ENCODE measurements at regions of chr5 and their contacts with region 1.

Region 1: DNA sequence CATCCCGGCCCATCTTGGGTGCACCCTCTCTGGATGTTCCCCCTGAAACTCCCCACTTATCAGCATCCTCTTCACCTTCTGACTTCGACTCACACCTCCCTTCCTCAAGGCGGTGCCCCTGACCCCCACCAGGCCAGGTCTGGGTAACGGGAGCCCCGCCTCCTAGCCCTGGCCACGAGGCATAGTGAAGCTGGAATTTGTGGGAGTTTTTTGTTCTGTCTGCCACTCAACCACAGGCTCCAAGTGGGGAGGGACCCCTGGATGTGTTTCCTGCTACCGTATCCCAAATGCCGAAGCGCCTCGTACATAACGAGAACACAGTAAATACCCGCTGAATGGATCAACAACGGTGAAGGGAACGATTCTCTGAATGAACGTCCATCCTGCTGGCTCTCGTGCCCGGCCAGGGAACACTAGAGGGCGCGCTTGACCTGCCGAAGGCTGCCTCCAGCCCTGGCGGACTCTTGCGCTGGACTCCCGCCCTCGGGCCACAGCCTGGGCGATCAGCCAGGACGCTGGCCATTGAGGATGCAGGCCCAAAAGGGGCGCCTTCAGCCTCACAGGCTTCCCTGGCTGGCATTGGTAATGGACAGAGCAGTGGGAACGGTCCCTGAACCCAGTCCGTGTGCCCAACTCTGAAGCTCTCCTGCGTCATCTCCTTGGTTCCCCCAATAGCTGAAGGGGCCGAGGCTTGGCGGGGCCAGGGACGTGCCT is 47.3 kb upstream of the PHYKPL start:
- DNase-seq: peak; percentile 87 to 95 (median 90)
- ATAC-seq: peak; percentile 83 to 94 (median 92)
- H3K4me3 ChIP-seq: no peak overlapping the region
- H3K27ac ChIP-seq: no peak overlapping the region
- H3K4me1 ChIP-seq: peaks cover 0 to 14% (median under 1%) of the 10 kb centered on the region in 12 donors
- H3K27me3 ChIP-seq: no peaks in the 10 kb centered on the region
- CTCF ChIP-seq: peak; percentile 86 to 98 (median 94)
- POLR2A ChIP-seq: no peak

Region 2: GRCh38 chr5:178331399-178331996 is 51.6 kb after region 1 on chr5:
- intact Hi-C with region 1: loop called in 1 of 10 experiments (anchors 2 kb)
- DNase-seq: peak; percentile 70 to 88 (median 81)
- ATAC-seq: peak; percentile 86 to 91 (median 88)
- H3K4me3 ChIP-seq: no peak overlapping the region
- H3K27ac ChIP-seq: peak overlapping the region; percentile 76 to 94 (median 85)
- H3K4me1 ChIP-seq: peaks cover 0 to 34% (median 20%) of the 10 kb centered on the region in 12 donors
- H3K27me3 ChIP-seq: no peaks in the 10 kb centered on the region
- CTCF ChIP-seq: no peak
- POLR2A ChIP-seq: peak in 1 of 2 donors; percentile 22

Region 3: GRCh38 chr5:178434851-178435250 is 155.0 kb after region 1 on chr5:
- intact Hi-C with region 1: loop called in 2 of 10 experiments (anchors 10 kb)
- DNase-seq: peak; percentile 64 to 81 (median 78)
- ATAC-seq: peak; percentile 82 to 90 (median 84)
- H3K4me3 ChIP-seq: peak overlapping the region in 2 of 12 donors; percentile 9 to 14
- H3K27ac ChIP-seq: peak overlapping the region in 5 of 12 donors; percentile 34 to 61 (median 54)
- H3K4me1 ChIP-seq: peaks cover 0 to 21% (median 3%) of the 10 kb centered on the region in 12 donors
- H3K27me3 ChIP-seq: no peaks in the 10 kb centered on the region
- CTCF ChIP-seq: peak in 3 of 12 donors; percentile 10 to 33 (median 32)
- POLR2A ChIP-seq: no peak

Region 4: GRCh38 chr5:178461004-178461730 is 181.3 kb after region 1 on chr5:
- intact Hi-C with region 1: loop called in 3 of 10 experiments (anchors 5 to 10 kb)
- DNase-seq: peak; percentile 81 to 89 (median 86)
- ATAC-seq: peak; percentile 94 to 98 (median 95)
- H3K4me3 ChIP-seq: peak overlapping the region in 2 of 12 donors; percentile 13 to 32
- H3K27ac ChIP-seq: peak overlapping the region; percentile 34 to 87 (median 70)
- H3K4me1 ChIP-seq: peaks cover 0 to 19% (median 7%) of the 10 kb centered on the region in 12 donors
- H3K27me3 ChIP-seq: no peaks in the 10 kb centered on the region
- CTCF ChIP-seq: peak; percentile 73 to 93 (median 84)
- POLR2A ChIP-seq: no peak

Region 5: DNA sequence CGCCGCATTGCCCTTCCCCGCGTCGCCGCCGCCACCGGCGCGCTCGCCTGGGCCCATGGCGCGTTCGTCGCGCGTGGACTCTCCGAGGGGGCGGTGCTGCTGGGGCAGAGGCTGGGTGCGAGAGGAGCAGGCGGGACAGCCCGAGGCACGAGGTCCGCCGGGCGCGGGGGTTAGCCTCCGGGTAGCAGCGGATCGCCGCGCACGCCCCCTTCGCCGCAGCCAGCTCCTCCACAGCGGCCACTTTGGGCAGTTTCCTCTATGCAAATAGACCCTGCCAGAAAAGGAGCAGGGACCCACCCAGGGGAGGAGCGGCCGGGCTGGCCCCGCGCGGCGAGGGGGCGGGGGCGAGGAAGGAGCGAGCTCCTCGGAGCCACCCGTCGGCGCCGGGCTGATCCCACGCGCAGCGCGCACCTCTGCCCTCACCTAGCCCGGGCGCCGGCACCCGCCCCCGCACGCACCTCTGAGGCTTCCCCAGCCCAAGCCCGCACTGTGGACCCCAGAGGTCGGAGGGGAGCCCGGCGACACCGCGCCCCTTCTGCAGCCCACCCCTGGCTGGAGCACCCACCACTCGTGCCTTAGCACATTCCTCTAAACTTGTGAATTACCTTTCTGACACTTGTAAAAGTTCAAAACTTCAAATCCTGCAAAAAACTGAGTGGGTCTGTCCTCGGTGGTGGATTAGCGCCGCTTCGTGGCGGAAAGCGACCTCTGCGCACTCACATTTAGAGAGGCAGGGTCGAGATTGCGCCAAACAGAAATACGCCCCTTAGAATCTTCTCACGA is 310.4 kb after region 1 on chr5 and contains the start of gene COL23A1:
- intact Hi-C with region 1: loop called in 9 of 10 experiments (anchors 1 to 10 kb)
- DNase-seq: peak; percentile 75 to 87 (median 80)
- ATAC-seq: peak; percentile 64 to 91 (median 86)
- H3K4me3 ChIP-seq: peak within 1 kb of the TSS; percentile 17 to 66 (median 56)
- H3K27ac ChIP-seq: peak within 1 kb of the TSS in 11 of 12 donors; percentile 54 to 86 (median 78)
- H3K4me1 ChIP-seq: peaks cover 0 to 39% (median 15%) of the 10 kb centered on the region in 12 donors
- H3K27me3 ChIP-seq: peaks cover 0 to 21% (median 9%) of the 10 kb centered on the region in 9 donors
- CTCF ChIP-seq: peak; percentile 41 to 80 (median 66)
- POLR2A ChIP-seq: no peak
- total RNA-seq, gene COL23A1: 6.0 to 33.0 (median 21.2) TPM

Region 6: GRCh38 chr5:178838695-178839685 is 559.1 kb after region 1 on chr5:
- intact Hi-C with region 1: loop called in 7 of 10 experiments (anchors 5 to 10 kb)
- DNase-seq: peak in 4 of 5 donors; percentile 47 to 70 (median 56)
- ATAC-seq: peak; percentile 83 to 95 (median 88)
- H3K4me3 ChIP-seq: no peak overlapping the region
- H3K27ac ChIP-seq: no peak overlapping the region
- H3K4me1 ChIP-seq: no peaks in the 10 kb centered on the region
- H3K27me3 ChIP-seq: peaks cover 0 to 4% (median 0%) of the 10 kb centered on the region in 9 donors
- CTCF ChIP-seq: peak in 11 of 12 donors; percentile 26 to 76 (median 56)
- POLR2A ChIP-seq: no peak

Region 7: GRCh38 chr5:179342577-179342976 is 1062.7 kb after region 1 on chr5:
- intact Hi-C with region 1: no loop called
- DNase-seq: no peak
- ATAC-seq: peak in 2 of 4 donors; percentile 16 to 25
- H3K4me3 ChIP-seq: peak overlapping the region in 5 of 12 donors; percentile 69 to 71 (median 70)
- H3K27ac ChIP-seq: no peak overlapping the region
- H3K4me1 ChIP-seq: peaks cover 0 to 35% (median 16%) of the 10 kb centered on the region in 12 donors
- H3K27me3 ChIP-seq: peaks cover 16 to 81% (median 38%) of the 10 kb centered on the region in 9 donors
- CTCF ChIP-seq: peak in 4 of 12 donors; percentile 17 to 41 (median 28)
- POLR2A ChIP-seq: no peak